Heart right ventricle (tissue), 16 donors: ENCODE measurements at regions of chr1 and their contacts with region 1.

Region 1: GRCh38 chr1:235878082-235878811 is 11.5 kb upstream of the LYST start:
- DNase-seq: peak in 1 of 2 donors; percentile 27
- ATAC-seq: peak; percentile 66 to 81 (median 70)
- H3K4me3 ChIP-seq: peak overlapping the region in 1 of 10 donors; percentile 6
- H3K27ac ChIP-seq: peak overlapping the region in 8 of 10 donors; percentile 4 to 64 (median 39)
- H3K4me1 ChIP-seq: peaks cover 0 to 82% (median 20%) of the 10 kb centered on the region in 9 donors
- H3K27me3 ChIP-seq: no peaks in the 10 kb centered on the region
- CTCF ChIP-seq: no peak

Region 2: GRCh38 chr1:235866913-235867845 is 11.1 kb before region 1 on chr1:
- intact Hi-C with region 1: no loop called
- DNase-seq: peak; percentile 94 to 97
- ATAC-seq: peak; percentile 97 to 99 (median 98)
- H3K4me3 ChIP-seq: peak overlapping the region; percentile 71 to 99 (median 96)
- H3K27ac ChIP-seq: peak overlapping the region; percentile 89 to 97 (median 94)
- H3K4me1 ChIP-seq: peaks cover 0 to 48% (median 25%) of the 10 kb centered on the region in 9 donors
- H3K27me3 ChIP-seq: no peaks in the 10 kb centered on the region
- CTCF ChIP-seq: no peak

Region 3: GRCh38 chr1:235960809-235961208 is 82.6 kb after region 1 on chr1:
- intact Hi-C with region 1: loop called in 1 of 10 experiments (anchors 10 kb)
- DNase-seq: no peak
- ATAC-seq: no peak
- H3K4me3 ChIP-seq: no peak overlapping the region
- H3K27ac ChIP-seq: no peak overlapping the region
- H3K4me1 ChIP-seq: no peaks in the 10 kb centered on the region
- H3K27me3 ChIP-seq: no peaks in the 10 kb centered on the region
- CTCF ChIP-seq: no peak